Heart left ventricle (tissue), 16 donors: ENCODE measurements at regions of chr21 and their contacts with region 1.

Region 1: GRCh38 chr21:41777951-41778874 is 11.4 kb upstream of the RIPK4 start:
- DNase-seq: peak; percentile 76 to 90 (median 80)
- ATAC-seq: peak; percentile 71 to 97 (median 92)
- H3K4me3 ChIP-seq: no peak overlapping the region
- H3K27ac ChIP-seq: no peak overlapping the region
- H3K4me1 ChIP-seq: peaks cover 0 to 10% (median 7%) of the 10 kb centered on the region in 12 donors
- H3K27me3 ChIP-seq: peaks cover 4 to 69% (median 38%) of the 10 kb centered on the region in 9 donors
- CTCF ChIP-seq: peak; percentile 76 to 97 (median 92)
- POLR2A ChIP-seq: no peak

Region 2: GRCh38 chr21:40562242-40563002 is 1215.8 kb before region 1 on chr21:
- intact Hi-C with region 1: no loop called
- DNase-seq: no peak
- ATAC-seq: no peak
- H3K4me3 ChIP-seq: no peak overlapping the region
- H3K27ac ChIP-seq: no peak overlapping the region
- H3K4me1 ChIP-seq: no peaks in the 10 kb centered on the region
- H3K27me3 ChIP-seq: no peaks in the 10 kb centered on the region
- CTCF ChIP-seq: no peak
- POLR2A ChIP-seq: no peak

Region 3: GRCh38 chr21:41121785-41122421 is 656.3 kb before region 1 on chr21:
- intact Hi-C with region 1: loop called in 1 of 10 experiments (anchors 5 kb)
- DNase-seq: peak; percentile 74 to 85 (median 80)
- ATAC-seq: peak; percentile 47 to 88 (median 86)
- H3K4me3 ChIP-seq: no peak overlapping the region
- H3K27ac ChIP-seq: no peak overlapping the region
- H3K4me1 ChIP-seq: peaks cover 0 to 9% (median 0%) of the 10 kb centered on the region in 12 donors
- H3K27me3 ChIP-seq: peaks cover 0 to 26% (median 5%) of the 10 kb centered on the region in 9 donors
- CTCF ChIP-seq: peak; percentile 78 to 93 (median 88)
- POLR2A ChIP-seq: no peak

Region 4: GRCh38 chr21:41460578-41461527 is 317.4 kb before region 1 on chr21:
- intact Hi-C with region 1: loop called in 1 of 10 experiments (anchors 10 kb)
- DNase-seq: peak; percentile 56 to 83 (median 81)
- ATAC-seq: peak in 3 of 4 donors; percentile 90 to 91 (median 90)
- H3K4me3 ChIP-seq: no peak overlapping the region
- H3K27ac ChIP-seq: no peak overlapping the region
- H3K4me1 ChIP-seq: peaks cover 0 to 2% (median 0%) of the 10 kb centered on the region in 12 donors
- H3K27me3 ChIP-seq: peaks cover 0 to 2% (median 0%) of the 10 kb centered on the region in 9 donors
- CTCF ChIP-seq: peak; percentile 64 to 85 (median 78)
- POLR2A ChIP-seq: no peak

Region 5: GRCh38 chr21:41612674-41613532 is 165.3 kb before region 1 on chr21:
- intact Hi-C with region 1: loop called (anchors 1 to 5 kb)
- DNase-seq: peak; percentile 65 to 80 (median 74)
- ATAC-seq: peak; percentile 80 to 91 (median 88)
- H3K4me3 ChIP-seq: no peak overlapping the region
- H3K27ac ChIP-seq: peak overlapping the region in 4 of 12 donors; percentile 27 to 66 (median 48)
- H3K4me1 ChIP-seq: peaks cover 0 to 26% (median 8%) of the 10 kb centered on the region in 12 donors
- H3K27me3 ChIP-seq: peaks cover 0 to 31% (median 9%) of the 10 kb centered on the region in 9 donors
- CTCF ChIP-seq: peak; percentile 57 to 82 (median 76)
- POLR2A ChIP-seq: no peak

Region 6: DNA sequence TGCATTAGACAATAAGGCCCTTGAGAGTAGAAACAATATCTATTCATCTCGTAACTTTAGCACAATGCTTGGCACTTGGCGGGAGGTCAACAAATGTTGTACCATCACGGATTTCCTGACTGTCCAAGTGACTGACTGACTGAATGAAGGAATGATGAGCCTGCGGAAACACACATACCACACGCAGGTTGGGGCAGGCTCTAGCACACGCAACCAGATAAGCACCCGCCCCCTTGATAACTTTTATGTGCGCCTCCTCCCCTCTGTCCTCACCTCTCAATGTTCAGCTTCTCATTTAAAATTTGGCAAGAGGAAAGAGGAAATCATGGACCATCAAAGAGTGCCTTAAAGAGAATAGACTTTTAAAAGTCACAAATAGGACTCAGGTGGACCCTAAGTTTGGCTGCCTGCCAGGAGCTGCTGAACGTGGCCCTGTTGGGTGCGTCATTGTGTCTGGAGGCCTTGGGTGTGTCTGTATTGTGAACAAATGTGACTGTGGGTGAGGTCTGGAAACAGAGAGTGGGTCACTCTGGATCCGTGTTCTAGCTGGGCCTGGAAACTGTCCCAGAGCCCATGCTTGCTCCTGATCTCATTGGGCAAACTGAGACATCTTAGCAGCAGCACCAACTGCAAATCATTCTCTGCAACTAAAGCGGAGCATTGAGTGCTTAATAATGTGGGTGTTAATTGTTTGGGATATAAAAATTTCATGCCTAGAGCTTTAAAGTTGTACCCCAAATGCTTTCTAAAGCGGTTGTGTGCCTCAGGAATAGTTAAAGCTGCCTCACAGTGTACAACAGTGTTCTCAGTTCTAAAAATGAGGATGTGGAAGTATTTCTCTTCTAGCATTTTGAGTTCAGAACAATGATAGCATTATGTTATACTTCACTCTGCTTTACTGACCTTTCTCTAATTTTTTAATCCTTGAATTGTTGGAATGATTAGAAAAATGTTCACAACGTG is 393.2 kb after region 1 on chr21:
- intact Hi-C with region 1: no loop called
- DNase-seq: peak; percentile 67 to 81 (median 71)
- ATAC-seq: peak; percentile 85 to 92 (median 86)
- H3K4me3 ChIP-seq: no peak overlapping the region
- H3K27ac ChIP-seq: peak overlapping the region in 10 of 12 donors; percentile 1 to 50 (median 35)
- H3K4me1 ChIP-seq: peaks cover 0 to 15% (median 0%) of the 10 kb centered on the region in 12 donors
- H3K27me3 ChIP-seq: no peaks in the 10 kb centered on the region
- CTCF ChIP-seq: no peak
- POLR2A ChIP-seq: no peak